Calu3 (cell line): ENCODE measurements at regions of chr12 and their contacts with region 1.

Region 1: DNA sequence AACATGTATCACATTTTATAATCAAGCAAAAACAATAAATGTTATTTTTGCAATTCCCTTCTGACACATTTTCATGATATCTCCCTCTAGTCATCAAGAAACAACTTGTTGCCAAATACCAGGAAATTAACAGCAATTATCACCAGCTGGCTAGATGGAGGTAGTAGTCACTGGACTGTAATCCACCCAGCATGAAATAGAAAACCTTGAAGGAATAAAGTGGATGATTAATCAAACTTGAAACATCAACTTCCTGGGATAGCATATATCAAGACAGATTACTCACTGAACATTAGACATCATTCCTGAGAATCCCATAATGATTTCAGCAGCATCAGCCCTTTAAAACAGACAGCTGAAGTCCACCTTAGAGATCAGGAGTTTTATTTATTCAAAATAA is 259.0 kb downstream of the CCDC59 start:
- DNase-seq: peak; percentile 18
- H3K4me3 Mint-ChIP-seq: no peak overlapping the region
- H3K27ac Mint-ChIP-seq: no peak overlapping the region
- H3K4me1 Mint-ChIP-seq: peaks cover 9% of the 10 kb centered on the region
- H3K27me3 Mint-ChIP-seq: no peaks in the 10 kb centered on the region
- CTCF ChIP-seq: no peak

Region 2: DNA sequence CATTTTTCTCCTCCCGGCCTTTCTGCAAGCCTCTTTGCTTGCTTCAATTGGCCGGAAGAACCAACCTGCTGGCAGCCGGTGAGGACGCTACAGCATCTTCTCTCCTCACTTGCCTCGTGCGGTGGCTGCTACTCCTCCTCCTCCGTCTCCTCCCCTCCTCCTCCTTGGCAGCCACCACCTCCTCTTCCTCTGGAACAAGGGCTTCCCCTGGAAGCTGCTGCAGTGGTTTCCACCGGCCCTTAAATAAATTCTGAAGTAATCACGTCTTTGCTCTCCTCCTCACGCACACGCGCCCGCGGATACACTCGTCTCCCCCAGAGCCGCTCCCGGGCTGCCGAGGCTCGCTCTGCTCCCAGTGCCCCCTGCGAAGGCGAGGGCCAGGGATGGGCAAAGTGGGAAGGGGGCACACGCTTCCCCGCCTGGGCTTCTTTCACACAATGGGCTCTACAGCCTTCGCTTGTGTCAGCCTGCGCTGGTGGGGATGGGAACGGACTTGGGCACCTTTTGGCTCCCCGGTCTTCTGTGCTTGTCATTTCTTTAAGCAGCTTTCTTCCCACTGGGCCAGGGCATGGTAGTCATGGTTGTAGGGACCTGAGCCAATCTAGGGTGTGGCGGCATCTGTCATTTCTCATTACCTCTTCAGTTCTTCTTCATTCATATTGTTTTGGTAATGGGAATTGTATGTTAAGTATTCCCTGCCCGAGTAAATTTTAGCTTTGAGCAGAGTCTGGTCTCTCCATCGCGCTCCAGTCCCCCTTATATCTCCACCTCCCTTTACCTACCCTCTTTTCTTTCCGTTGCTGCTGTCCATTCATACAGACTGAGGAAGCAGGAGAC is 339.8 kb before region 1 on chr12 and contains the start of gene PPFIA2:
- CTCF ChIA-PET with region 1: no interaction called
- intact Hi-C with region 1: loop called (anchors 5 kb)
- DNase-seq: peak; percentile 11
- H3K4me3 Mint-ChIP-seq: peak within 1 kb of the TSS; percentile 86
- H3K27ac Mint-ChIP-seq: no peak within 1 kb of the TSS
- H3K4me1 Mint-ChIP-seq: peaks cover 10% of the 10 kb centered on the region
- H3K27me3 Mint-ChIP-seq: peaks cover 17% of the 10 kb centered on the region
- CTCF ChIP-seq: no peak
- total RNA-seq, gene PPFIA2: 0.07 TPM in 1 of 2 replicates, not detected in the other

Region 3: GRCh38 chr12:82174936-82175335 is 75.7 kb after region 1 on chr12:
- CTCF ChIA-PET with region 1: no interaction called
- intact Hi-C with region 1: loop called (anchors 5 kb)
- DNase-seq: peak; percentile 28
- H3K4me3 Mint-ChIP-seq: no peak overlapping the region
- H3K27ac Mint-ChIP-seq: no peak overlapping the region
- H3K4me1 Mint-ChIP-seq: peaks cover 13% of the 10 kb centered on the region
- H3K27me3 Mint-ChIP-seq: no peaks in the 10 kb centered on the region
- CTCF ChIP-seq: no peak